Activated CD4-positive, alpha-beta memory T cell treated with anti-CD3 and anti-CD28 coated beads, Interleukin-2, amount 10 ng/mL, durations not matched to agents 7 days and 5 days (primary cell): ENCODE measurements at regions of chr2 and their contacts with region 1.

Region 1: GRCh38 chr2:25851740-25852503 is 26.4 kb downstream of the ASXL2 start:
- DNase-seq: peak; percentile 25
- H3K4me3 Mint-ChIP-seq: peak overlapping the region; percentile 64
- H3K27ac Mint-ChIP-seq: peak overlapping the region; percentile 74
- H3K4me1 Mint-ChIP-seq: peaks cover 43% of the 10 kb centered on the region
- H3K27me3 Mint-ChIP-seq: no peaks in the 10 kb centered on the region

Region 2: DNA sequence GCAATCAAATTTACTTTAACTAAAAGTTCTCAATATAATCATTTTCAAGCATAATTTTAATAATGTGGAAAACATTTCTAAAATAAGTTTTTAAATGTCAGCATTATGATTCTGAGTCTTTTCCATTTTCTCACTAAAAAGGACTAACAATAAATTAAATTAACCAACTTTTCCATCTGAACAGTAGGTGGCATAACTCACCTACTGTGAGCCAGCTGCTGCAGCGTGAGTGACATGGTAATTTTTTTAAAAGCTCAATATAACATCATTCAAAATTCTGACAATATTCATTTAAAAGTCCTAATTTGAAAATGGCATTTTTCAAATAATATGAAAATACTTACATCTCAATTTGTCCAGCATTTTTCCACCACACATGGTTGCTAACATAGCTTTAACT is 245.0 kb before region 1 on chr2:
- CTCF ChIA-PET with region 1: interaction called, 49 read pairs
- POLR2A ChIA-PET with region 1: no interaction called
- DNase-seq: no peak
- H3K4me3 Mint-ChIP-seq: no peak overlapping the region
- H3K27ac Mint-ChIP-seq: no peak overlapping the region
- H3K4me1 Mint-ChIP-seq: peaks cover 15% of the 10 kb centered on the region
- H3K27me3 Mint-ChIP-seq: no peaks in the 10 kb centered on the region

Region 3: DNA sequence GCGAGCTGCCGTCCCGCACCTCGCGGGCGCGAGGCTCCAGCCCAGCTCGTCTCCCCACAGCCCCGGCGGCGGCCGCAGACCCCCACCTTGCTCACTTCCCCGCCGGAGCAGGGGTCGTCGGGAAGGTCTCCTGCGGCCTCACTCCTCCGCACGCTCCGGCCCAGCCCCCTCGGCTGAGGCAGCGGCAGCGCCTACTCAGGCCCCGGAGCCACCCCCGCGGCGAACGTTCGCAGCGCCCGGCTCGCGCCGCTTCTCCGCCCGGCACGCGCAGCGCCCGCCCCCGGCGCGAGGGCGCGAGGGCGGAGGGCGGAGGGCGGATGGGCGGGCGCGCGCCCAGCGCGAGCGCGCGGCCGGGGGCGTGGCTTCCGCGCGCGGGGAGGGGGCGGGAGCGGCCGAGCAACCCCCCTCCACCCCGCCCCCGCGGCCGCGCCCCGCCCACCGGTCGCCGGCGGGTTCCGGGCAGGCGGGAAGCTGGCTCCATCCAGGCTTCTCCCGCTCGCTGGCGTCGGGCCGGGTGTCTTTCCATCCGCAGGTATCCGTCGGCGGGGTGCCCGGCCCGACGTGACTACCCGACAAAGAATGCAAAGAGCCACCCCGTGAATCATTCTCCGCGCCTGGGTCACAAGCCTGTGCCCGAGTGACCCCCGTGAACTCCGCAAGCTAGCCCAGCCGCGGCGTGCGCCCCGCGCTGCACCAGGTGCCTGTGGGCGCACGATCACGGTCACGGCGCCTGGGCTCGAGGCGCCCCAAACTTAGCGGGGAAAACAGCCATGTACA is 178.4 kb before region 1 on chr2 and contains the start of gene DTNB:
- CTCF ChIA-PET with region 1: interaction called, 3 read pairs
- POLR2A ChIA-PET with region 1: interaction called, 11 read pairs
- DNase-seq: peak; percentile 86
- H3K4me3 Mint-ChIP-seq: peak within 1 kb of the TSS; percentile 82
- H3K27ac Mint-ChIP-seq: peak within 1 kb of the TSS; percentile 61
- H3K4me1 Mint-ChIP-seq: peaks cover 33% of the 10 kb centered on the region
- H3K27me3 Mint-ChIP-seq: peaks cover 15% of the 10 kb centered on the region
- total RNA-seq, gene DTNB: 27.0 to 29.8 TPM

Region 4: DNA sequence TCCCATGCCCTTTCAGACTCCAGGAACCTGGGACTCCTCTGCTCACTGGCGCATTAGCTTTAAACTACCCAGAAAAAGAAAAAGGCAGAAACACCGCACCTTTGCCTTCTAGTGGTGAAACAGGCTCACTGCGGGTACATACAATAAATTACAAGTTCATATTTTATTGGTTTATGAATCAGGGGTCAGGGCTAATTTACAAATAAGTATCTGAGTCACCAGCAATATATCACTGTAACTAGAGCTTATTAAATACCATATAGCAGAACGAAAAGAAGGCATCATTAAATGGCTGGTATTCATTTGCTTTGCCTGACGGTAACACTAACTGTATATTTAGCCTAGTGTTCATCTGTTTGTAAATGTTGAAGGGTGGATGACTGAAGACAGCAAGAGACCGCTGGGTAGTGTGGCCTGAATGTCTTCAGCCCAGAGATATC is 151.7 kb before region 1 on chr2:
- CTCF ChIA-PET with region 1: interaction called, 10 read pairs
- POLR2A ChIA-PET with region 1: no interaction called
- DNase-seq: peak; percentile 26
- H3K4me3 Mint-ChIP-seq: no peak overlapping the region
- H3K27ac Mint-ChIP-seq: no peak overlapping the region
- H3K4me1 Mint-ChIP-seq: peaks cover 4% of the 10 kb centered on the region
- H3K27me3 Mint-ChIP-seq: no peaks in the 10 kb centered on the region

Region 5: DNA sequence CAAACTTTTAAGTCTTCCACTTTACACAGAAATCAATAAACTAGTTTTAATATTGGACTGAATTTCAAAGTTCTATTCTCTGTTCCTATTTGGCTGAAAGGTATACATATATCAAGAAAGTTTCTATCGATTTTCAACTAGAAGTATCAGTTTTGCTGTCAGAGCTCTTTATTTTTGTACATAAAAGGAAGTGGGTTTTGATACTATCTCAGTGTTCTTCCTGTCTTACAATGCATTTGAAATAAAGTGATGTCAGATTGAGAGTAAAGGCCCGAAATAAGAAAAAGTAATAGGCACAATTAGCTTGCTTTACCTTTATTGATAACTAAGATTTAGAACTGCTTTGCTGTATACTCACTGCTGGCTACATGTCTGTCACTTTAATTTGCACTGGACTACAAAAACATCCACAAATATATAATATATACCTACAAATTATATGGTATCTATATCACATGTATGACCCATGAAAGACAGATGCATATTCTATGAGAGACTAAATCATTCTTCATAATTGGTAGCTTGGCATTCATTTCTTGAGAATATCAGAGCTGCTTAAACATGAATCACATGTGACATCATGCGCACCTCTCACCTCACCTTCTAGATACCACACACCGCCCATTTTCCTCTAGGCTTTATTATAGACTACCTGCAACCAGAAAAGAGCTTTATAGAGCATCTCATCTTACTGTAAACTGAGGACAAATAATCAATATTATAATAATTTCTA is 57.2 kb before region 1 on chr2:
- CTCF ChIA-PET with region 1: interaction called, 13 read pairs
- POLR2A ChIA-PET with region 1: interaction called, 10 read pairs
- DNase-seq: no peak
- H3K4me3 Mint-ChIP-seq: peak overlapping the region; percentile 73
- H3K27ac Mint-ChIP-seq: peak overlapping the region; percentile 84
- H3K4me1 Mint-ChIP-seq: peaks cover 81% of the 10 kb centered on the region
- H3K27me3 Mint-ChIP-seq: no peaks in the 10 kb centered on the region

Region 6: GRCh38 chr2:25878361-25879132 is 26.6 kb after region 1 on chr2 and contains the start of gene ASXL2:
- CTCF ChIA-PET with region 1: interaction called, 45 read pairs
- POLR2A ChIA-PET with region 1: interaction called, 44 read pairs
- DNase-seq: peak; percentile 98
- H3K4me3 Mint-ChIP-seq: peak within 1 kb of the TSS; percentile 95
- H3K27ac Mint-ChIP-seq: peak within 1 kb of the TSS; percentile 99
- H3K4me1 Mint-ChIP-seq: peaks cover 41% of the 10 kb centered on the region
- H3K27me3 Mint-ChIP-seq: no peaks in the 10 kb centered on the region
- total RNA-seq, gene ASXL2: 43.7 to 45.0 TPM

Region 7: DNA sequence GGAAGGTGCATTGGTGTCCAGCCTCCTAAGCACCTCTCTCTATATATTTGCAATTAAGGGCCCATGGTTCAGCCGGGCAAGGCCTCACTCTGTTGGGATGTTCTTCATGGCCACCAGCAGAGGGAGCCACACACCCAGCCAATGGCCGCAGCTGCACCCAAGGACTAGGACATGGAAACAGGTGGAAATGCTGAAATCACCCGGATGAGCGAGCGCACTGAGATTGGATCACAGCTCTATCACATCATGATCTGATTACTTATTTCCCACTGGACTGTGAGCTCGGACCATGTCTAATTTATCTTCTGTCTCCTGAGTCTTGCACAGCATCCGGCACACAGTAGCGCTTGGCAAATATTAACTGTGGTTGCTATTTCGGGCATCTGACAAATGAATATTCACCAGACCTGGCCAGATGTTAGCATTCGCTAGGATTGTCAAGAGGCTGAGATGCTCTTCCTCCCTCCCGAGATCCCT is 99.2 kb after region 1 on chr2:
- CTCF ChIA-PET with region 1: interaction called, 28 read pairs
- POLR2A ChIA-PET with region 1: no interaction called
- DNase-seq: peak; percentile 77
- H3K4me3 Mint-ChIP-seq: no peak overlapping the region
- H3K27ac Mint-ChIP-seq: no peak overlapping the region
- H3K4me1 Mint-ChIP-seq: peaks cover 4% of the 10 kb centered on the region
- H3K27me3 Mint-ChIP-seq: no peaks in the 10 kb centered on the region